Activated naive CD4-positive, alpha-beta T cell treated with anti-CD3 and anti-CD28 coated beads, Interleukin-2, amount 10 ng/mL, durations not matched to agents 7 days and 5 days (primary cell): ENCODE measurements at regions of chr6 and their contacts with region 1.

Region 1: DNA sequence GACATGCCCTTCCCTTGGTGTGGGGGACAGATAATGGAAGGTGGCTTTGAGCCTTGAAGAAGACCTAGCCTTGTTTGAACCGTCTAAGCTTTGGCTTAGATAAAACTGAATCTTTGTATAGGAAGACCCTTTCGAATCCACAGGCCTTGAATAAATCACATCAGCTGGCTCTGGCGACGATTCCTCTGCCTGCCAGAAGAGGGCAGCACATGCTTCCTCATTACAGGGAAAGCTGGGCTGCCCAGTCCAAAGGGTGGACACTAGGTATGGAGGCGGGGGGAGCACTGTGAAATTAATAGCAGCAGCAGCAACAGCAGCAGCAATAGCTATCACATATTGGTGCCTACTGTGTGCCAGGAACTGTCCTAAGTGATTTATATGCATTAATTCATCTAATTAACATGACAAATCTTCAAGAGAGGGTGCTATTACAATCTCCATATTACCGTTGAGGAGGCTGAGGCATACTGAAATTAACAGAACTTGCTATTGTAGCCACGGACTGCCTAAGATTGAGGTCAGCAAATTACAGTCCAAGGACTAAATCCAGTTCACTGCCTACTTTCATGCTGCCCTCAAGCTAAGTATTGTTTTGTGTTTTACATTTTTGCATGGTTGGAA is 85.1 kb downstream of the CLIC5 start:
- DNase-seq: peak; percentile 64
- H3K4me3 Mint-ChIP-seq: no peak overlapping the region
- H3K27ac Mint-ChIP-seq: no peak overlapping the region
- H3K4me1 Mint-ChIP-seq: no peaks in the 10 kb centered on the region
- H3K27me3 Mint-ChIP-seq: no peaks in the 10 kb centered on the region

Region 2: DNA sequence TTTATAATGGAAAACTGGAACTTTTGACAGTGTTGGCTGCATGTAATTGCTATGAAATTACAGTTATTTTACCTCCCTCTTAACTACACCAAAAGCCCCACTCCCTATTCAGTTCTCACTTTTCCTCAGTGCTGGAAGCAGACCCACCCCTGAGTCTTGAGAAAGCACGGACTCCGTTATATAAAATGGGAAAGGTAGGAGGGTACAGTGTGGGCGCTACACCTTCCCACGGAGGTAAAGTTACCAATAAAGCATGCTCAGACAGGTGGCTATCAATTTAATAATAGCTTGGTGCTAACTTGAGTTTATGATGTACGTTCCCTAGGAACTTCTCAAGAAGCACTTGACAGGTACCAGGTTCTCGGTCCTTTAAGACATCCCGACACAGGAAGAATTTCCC is 26.1 kb after region 1 on chr6:
- CTCF ChIA-PET with region 1: no interaction called
- DNase-seq: no peak
- H3K4me3 Mint-ChIP-seq: no peak overlapping the region
- H3K27ac Mint-ChIP-seq: no peak overlapping the region
- H3K4me1 Mint-ChIP-seq: no peaks in the 10 kb centered on the region
- H3K27me3 Mint-ChIP-seq: peaks cover 4% of the 10 kb centered on the region

Region 3: DNA sequence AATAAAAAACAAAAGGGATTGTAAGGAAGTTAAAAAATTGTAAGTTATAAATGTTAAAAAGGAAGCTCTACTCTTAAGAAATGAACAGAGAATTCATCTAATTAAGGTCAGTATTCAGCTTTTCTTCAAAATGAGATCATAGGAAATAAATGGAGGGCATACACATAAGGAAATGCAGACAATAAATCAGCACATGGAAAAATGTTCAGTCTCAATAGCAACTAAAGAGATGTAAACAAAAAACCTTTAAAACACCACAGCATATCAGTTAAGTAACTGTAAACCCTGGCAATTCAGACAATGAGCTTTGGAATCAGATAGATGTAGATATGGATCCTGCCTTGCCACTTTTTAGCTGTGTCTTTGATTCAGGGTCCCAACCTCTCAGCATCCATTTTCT is 109.1 kb after region 1 on chr6:
- CTCF ChIA-PET with region 1: interaction called, 13 read pairs
- DNase-seq: no peak
- H3K4me3 Mint-ChIP-seq: no peak overlapping the region
- H3K27ac Mint-ChIP-seq: no peak overlapping the region
- H3K4me1 Mint-ChIP-seq: no peaks in the 10 kb centered on the region
- H3K27me3 Mint-ChIP-seq: no peaks in the 10 kb centered on the region

Region 4: GRCh38 chr6:46090115-46091079 is 159.9 kb after region 1 on chr6:
- CTCF ChIA-PET with region 1: interaction called, 13 read pairs
- DNase-seq: peak; percentile 69
- H3K4me3 Mint-ChIP-seq: no peak overlapping the region
- H3K27ac Mint-ChIP-seq: no peak overlapping the region
- H3K4me1 Mint-ChIP-seq: no peaks in the 10 kb centered on the region
- H3K27me3 Mint-ChIP-seq: peaks cover 11% of the 10 kb centered on the region

Region 5: DNA sequence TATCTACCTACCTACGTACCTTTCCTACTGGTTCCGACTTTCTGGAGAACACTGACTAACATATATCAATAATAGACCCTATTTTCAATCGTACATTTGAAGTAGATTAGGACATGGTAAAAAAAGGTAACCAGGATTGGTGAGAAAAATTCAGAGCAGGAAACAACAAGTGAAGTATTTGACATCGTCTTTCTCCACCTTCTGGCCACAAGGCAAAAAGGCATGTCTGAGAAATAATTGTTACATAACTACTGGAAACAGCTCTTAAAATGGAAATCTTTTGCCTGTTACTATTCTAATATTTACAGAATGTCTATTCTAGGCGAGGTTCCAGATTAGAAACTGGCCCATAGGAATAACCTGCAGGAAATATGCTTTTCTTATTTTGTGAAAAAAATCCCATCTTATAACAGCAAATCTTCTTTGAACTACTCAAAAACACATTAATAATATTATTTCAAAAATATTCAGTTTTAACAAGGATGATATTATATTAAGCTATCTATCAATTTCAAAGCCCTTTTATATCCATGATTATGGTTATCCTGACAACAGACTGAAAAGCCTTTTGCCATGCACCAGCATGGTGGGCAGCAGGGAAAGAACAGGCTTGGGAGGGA is 479.9 kb after region 1 on chr6:
- CTCF ChIA-PET with region 1: interaction called, 11 read pairs
- DNase-seq: peak; percentile 44
- H3K4me3 Mint-ChIP-seq: no peak overlapping the region
- H3K27ac Mint-ChIP-seq: no peak overlapping the region
- H3K4me1 Mint-ChIP-seq: no peaks in the 10 kb centered on the region
- H3K27me3 Mint-ChIP-seq: no peaks in the 10 kb centered on the region